CD8-positive, alpha-beta memory T cell (primary cell): ENCODE measurements at regions of chr17 and their contacts with region 1.

Region 1: DNA sequence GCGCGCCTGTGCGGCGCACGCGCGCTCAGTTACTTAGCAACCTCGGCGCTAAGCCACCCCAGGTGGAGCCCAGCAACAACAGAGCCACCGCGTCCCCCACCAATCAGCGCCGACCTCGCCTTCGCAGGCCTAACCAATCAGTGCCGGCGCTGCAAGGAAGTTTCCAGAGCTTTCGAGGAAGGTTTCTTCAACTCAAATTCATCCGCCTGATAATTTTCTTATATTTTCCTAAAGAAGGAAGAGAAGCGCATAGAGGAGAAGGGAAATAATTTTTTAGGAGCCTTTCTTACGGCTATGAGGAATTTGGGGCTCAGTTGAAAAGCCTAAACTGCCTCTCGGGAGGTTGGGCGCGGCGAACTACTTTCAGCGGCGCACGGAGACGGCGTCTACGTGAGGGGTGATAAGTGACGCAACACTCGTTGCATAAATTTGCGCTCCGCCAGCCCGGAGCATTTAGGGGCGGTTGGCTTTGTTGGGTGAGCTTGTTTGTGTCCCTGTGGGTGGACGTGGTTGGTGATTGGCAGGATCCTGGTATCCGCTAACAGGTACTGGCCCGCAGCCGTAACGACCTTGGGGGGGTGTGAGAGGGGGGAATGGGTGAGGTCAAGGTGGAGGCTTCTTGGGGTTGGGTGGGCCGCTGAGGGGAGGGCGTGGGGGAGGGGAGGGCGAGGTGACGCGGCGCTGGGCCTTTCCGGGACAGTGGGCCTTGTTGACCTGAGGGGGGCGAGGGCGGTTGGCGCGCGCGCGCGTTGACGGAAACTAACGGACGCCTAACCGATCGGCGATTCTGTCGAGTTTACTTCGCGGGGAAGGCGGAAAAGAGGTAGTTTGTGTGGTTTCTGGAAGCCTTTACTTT is at the start of gene UBB:
- DNase-seq: peak; percentile 92 to 98 (median 94)
- H3K4me3 ChIP-seq: peak within 1 kb of the TSS; percentile 87
- H3K4me3 Mint-ChIP-seq: peak within 1 kb of the TSS; percentile 87 to 93 (median 91)
- H3K27ac ChIP-seq: peak within 1 kb of the TSS; percentile 96
- H3K27ac Mint-ChIP-seq: peak within 1 kb of the TSS; percentile 95 to 99 (median 98)
- H3K4me1 ChIP-seq: peaks cover 14% of the 10 kb centered on the region
- H3K4me1 Mint-ChIP-seq: peaks cover 34 to 47% (median 45%) of the 10 kb centered on the region in 3 donors
- H3K27me3 ChIP-seq: no peaks in the 10 kb centered on the region
- H3K27me3 Mint-ChIP-seq: peaks cover 0 to 7% of the 10 kb centered on the region in 2 donors
- total RNA-seq, gene UBB: 1,678 to 1,690 TPM

Region 2: GRCh38 chr17:16329519-16330271 is 51.2 kb before region 1 on chr17:
- CTCF ChIA-PET with region 1: no interaction called
- POLR2A ChIA-PET with region 1: no interaction called
- DNase-seq: no peak
- H3K4me3 ChIP-seq: no peak overlapping the region
- H3K4me3 Mint-ChIP-seq: no peak overlapping the region
- H3K27ac ChIP-seq: no peak overlapping the region
- H3K27ac Mint-ChIP-seq: peak overlapping the region in 1 of 8 donors; percentile 84
- H3K4me1 ChIP-seq: no peaks in the 10 kb centered on the region
- H3K4me1 Mint-ChIP-seq: no peaks in the 10 kb centered on the region
- H3K27me3 ChIP-seq: no peaks in the 10 kb centered on the region
- H3K27me3 Mint-ChIP-seq: no peaks in the 10 kb centered on the region

Region 3: GRCh38 chr17:16353317-16354174 is 27.3 kb before region 1 on chr17 and contains the start of gene CENPV:
- CTCF ChIA-PET with region 1: no interaction called
- POLR2A ChIA-PET with region 1: interaction called, 13 read pairs
- DNase-seq: peak; percentile 56 to 79 (median 67)
- H3K4me3 ChIP-seq: peak within 1 kb of the TSS; percentile 69
- H3K4me3 Mint-ChIP-seq: peak within 1 kb of the TSS; percentile 93 to 98 (median 94)
- H3K27ac ChIP-seq: peak within 1 kb of the TSS; percentile 31
- H3K27ac Mint-ChIP-seq: peak within 1 kb of the TSS; percentile 57 to 96 (median 80)
- H3K4me1 ChIP-seq: peaks cover 13% of the 10 kb centered on the region
- H3K4me1 Mint-ChIP-seq: peaks cover 17 to 21% (median 20%) of the 10 kb centered on the region in 3 donors
- H3K27me3 ChIP-seq: no peaks in the 10 kb centered on the region
- H3K27me3 Mint-ChIP-seq: peaks cover 0 to 2% of the 10 kb centered on the region in 2 donors
- total RNA-seq, gene CENPV: 53.4 to 56.4 TPM

Region 4: GRCh38 chr17:16415031-16415924 is 34.4 kb after region 1 on chr17 and contains the start of gene TRPV2:
- CTCF ChIA-PET with region 1: interaction called, 52 read pairs
- POLR2A ChIA-PET with region 1: interaction called, 23 read pairs
- DNase-seq: peak; percentile 30 to 71 (median 50)
- H3K4me3 ChIP-seq: peak within 1 kb of the TSS; percentile 96
- H3K4me3 Mint-ChIP-seq: peak within 1 kb of the TSS; percentile 90 to 100 (median 99)
- H3K27ac ChIP-seq: peak within 1 kb of the TSS; percentile 95
- H3K27ac Mint-ChIP-seq: peak within 1 kb of the TSS; percentile 95 to 100 (median 99)
- H3K4me1 ChIP-seq: peaks cover 50% of the 10 kb centered on the region
- H3K4me1 Mint-ChIP-seq: peaks cover 44 to 54% (median 52%) of the 10 kb centered on the region in 3 donors
- H3K27me3 ChIP-seq: no peaks in the 10 kb centered on the region
- H3K27me3 Mint-ChIP-seq: peaks cover 0 to 1% of the 10 kb centered on the region in 2 donors
- total RNA-seq, gene TRPV2: 60.0 to 67.3 TPM

Region 5: GRCh38 chr17:16438557-16439302 is 57.9 kb after region 1 on chr17:
- CTCF ChIA-PET with region 1: interaction called, 5 read pairs
- POLR2A ChIA-PET with region 1: interaction called, 23 read pairs
- DNase-seq: peak; percentile 91 to 97 (median 97)
- H3K4me3 ChIP-seq: peak overlapping the region; percentile 74
- H3K4me3 Mint-ChIP-seq: peak overlapping the region; percentile 96 to 100 (median 99)
- H3K27ac ChIP-seq: peak overlapping the region; percentile 92
- H3K27ac Mint-ChIP-seq: peak overlapping the region; percentile 78 to 100 (median 99)
- H3K4me1 ChIP-seq: peaks cover 35% of the 10 kb centered on the region
- H3K4me1 Mint-ChIP-seq: peaks cover 55 to 61% (median 59%) of the 10 kb centered on the region in 3 donors
- H3K27me3 ChIP-seq: no peaks in the 10 kb centered on the region
- H3K27me3 Mint-ChIP-seq: no peaks in the 10 kb centered on the region

Region 6: GRCh38 chr17:16537130-16537458 is 156.2 kb after region 1 on chr17:
- CTCF ChIA-PET with region 1: interaction called, 3 read pairs
- POLR2A ChIA-PET with region 1: interaction called, 19 read pairs
- DNase-seq: no peak
- H3K4me3 ChIP-seq: peak overlapping the region; percentile 86
- H3K4me3 Mint-ChIP-seq: peak overlapping the region; percentile 94 to 99 (median 98)
- H3K27ac ChIP-seq: no peak overlapping the region
- H3K27ac Mint-ChIP-seq: peak overlapping the region in 7 of 8 donors; percentile 15 to 98 (median 80)
- H3K4me1 ChIP-seq: peaks cover 18% of the 10 kb centered on the region
- H3K4me1 Mint-ChIP-seq: peaks cover 17 to 31% (median 19%) of the 10 kb centered on the region in 3 donors
- H3K27me3 ChIP-seq: no peaks in the 10 kb centered on the region
- H3K27me3 Mint-ChIP-seq: peaks cover 0 to 6% of the 10 kb centered on the region in 2 donors